ENCODE measurements at regions of chr12 and their contacts with region 1.

Region 1: DNA sequence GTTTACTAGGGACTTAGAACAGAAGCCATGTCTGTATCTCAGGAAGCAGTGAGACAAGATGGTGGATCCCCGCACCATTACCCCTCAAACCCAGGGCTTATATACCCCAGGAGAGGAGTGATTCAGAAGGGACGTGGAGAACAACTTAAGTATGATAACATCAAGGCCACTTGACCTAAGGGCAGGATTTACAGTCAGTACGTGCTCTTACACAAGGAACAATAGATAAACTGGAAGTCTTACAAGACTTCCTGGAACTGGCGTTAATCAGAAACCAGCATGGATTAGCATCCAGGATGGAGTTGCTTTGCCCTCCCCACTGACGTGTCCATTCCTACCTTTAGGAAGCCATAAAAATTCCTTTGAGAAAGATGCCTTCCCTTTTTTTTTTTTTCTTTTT is 8.6 kb upstream of the ETFBKMT start:
- DNase-seq: no peak
- H3K4me3 ChIP-seq: no peak overlapping the region
- H3K27ac ChIP-seq: no peak overlapping the region
- H3K4me1 ChIP-seq: peaks cover 9% of the 10 kb centered on the region
- H3K27me3 ChIP-seq: no peaks in the 10 kb centered on the region
- CTCF ChIP-seq: no peak
- EP300 ChIP-seq: no peak
- POLR2A ChIP-seq: no peak

Region 2: DNA sequence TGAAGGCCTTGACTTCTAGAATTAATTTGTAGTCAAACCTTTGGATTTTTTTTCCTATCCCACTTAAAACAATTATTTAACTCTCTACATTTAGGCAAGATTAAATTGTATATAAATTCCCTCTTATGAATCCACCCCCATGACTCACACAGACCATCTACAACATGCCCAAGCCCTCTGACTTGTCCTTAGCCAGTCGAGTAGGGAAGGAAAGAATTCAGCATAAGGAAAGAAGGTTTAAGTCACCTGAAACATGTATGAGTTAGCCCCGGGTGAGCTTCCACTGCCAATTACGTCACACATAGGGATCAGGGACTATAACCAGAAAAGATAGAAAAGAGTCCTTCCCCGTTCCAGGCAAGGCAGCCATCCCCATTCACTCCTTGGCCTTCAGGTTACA is 293.4 kb after region 1 on chr12:
- intact Hi-C with region 1: no loop called
- DNase-seq: no peak
- H3K4me3 ChIP-seq: no peak overlapping the region
- H3K27ac ChIP-seq: no peak overlapping the region
- H3K4me1 ChIP-seq: no peaks in the 10 kb centered on the region
- H3K27me3 ChIP-seq: no peaks in the 10 kb centered on the region
- CTCF ChIP-seq: no peak
- EP300 ChIP-seq: no peak
- POLR2A ChIP-seq: no peak

Region 3: DNA sequence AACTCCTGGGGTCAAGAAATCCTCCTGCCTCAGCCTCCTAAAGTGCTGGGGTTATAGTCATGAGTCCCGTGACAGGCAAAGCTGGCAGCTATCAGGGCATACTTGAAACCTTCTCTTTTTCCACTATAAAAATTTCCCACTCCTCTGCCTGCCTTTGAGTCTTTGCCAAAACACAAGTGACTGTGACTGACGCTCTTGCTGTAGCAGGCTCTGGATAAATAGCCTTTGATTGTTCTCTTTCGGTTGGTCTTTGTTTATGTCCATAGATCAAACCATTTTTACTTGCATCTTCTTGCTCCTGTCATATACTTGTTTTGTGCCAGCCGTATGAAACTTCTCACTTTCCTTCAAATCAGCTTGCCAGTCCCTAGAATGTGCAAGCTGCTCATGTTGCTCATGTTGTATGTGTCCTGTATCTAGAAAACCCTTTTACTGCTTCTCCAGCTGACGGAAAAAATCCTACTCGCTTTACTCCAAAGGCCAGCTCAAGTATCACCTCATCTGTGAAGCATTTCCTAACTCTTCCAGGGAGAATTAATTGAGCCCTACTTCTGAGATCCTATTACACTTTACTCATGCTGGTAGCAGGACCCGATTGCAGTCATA is 381.4 kb after region 1 on chr12:
- intact Hi-C with region 1: no loop called
- DNase-seq: no peak
- H3K4me3 ChIP-seq: no peak overlapping the region
- H3K27ac ChIP-seq: no peak overlapping the region
- H3K4me1 ChIP-seq: peaks cover 4% of the 10 kb centered on the region
- H3K27me3 ChIP-seq: no peaks in the 10 kb centered on the region
- CTCF ChIP-seq: no peak
- EP300 ChIP-seq: no peak
- POLR2A ChIP-seq: no peak

Region 4: DNA sequence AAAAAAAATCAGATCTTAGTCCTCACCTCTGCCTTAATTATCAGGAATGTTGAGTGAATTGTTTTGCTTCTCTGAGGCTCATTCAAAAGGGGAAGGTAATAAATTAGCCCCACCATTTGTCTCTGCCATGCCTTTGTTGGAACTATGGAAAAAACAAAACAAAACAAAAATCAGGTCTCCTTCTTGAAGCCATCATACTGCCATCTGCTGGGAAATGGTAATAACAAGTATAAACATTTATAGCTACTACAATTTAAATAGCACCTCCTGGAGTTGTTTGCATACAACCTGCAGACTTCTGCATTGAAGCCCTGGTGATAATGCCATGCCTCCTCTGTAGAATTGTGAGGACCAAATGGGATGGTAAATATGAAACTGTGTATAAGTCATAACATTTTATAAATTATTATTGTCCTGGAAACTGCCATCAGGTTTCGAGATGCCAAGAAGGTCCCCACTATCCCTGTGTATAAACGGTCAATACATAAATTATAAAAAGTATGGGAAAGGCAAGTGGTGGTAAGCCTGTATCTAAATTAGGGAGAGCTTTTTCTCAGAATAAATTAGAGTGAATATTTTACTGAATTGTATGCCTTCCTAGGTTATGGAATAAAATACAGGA is 661.2 kb after region 1 on chr12:
- intact Hi-C with region 1: loop called in 2 of 4 experiments (anchors 5 to 10 kb)
- DNase-seq: no peak
- H3K4me3 ChIP-seq: no peak overlapping the region
- H3K27ac ChIP-seq: no peak overlapping the region
- H3K4me1 ChIP-seq: peaks cover 5% of the 10 kb centered on the region
- H3K27me3 ChIP-seq: no peaks in the 10 kb centered on the region
- CTCF ChIP-seq: peak in 2 of 3 donors; percentile 51
- EP300 ChIP-seq: no peak
- POLR2A ChIP-seq: no peak

Measured in ovary (tissue), 10 donors.